ENCODE measurements at regions of chr15 and their contacts with region 1.

Region 1: DNA sequence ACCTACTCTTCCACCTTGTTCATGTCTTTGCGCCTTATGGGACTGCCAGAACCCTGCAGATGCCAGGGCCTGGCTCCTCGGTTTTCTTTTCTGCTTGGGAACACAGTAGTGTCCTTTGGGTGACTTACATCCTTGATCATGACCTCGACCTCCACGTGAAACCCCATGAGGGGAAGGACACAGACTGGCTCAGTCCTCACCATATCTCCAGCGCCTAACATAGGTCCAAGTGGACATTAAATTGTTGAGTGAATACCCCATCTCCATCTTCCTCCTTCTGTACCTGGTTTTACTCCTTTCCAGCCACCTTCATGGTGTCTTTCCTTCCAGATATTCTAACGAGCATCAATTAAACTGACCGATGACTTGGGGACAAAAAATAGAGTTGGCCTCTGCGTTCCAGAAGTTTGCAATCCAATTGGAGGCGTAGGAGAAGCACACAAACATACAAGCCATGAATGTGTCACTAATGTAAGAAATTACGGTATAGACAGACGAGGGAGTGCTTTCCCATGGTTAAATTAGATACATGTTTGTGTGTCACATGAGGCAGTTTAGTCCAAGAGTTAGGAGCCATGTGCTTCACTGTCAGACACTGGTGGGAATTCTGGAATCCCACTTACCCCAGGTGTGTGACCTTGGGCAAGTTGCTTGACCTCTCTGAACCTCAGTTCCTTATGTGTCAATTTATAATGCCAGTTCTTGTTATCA is 907 bp upstream of the HERC1 start:
- DNase-seq: no peak
- H3K4me3 ChIP-seq: peak overlapping the region; percentile 64 to 85
- H3K27ac ChIP-seq: peak overlapping the region; percentile 96
- H3K4me1 ChIP-seq: peaks cover 35% of the 10 kb centered on the region
- H3K27me3 ChIP-seq: no peaks in the 10 kb centered on the region
- CTCF ChIP-seq: no peak
- POLR2A ChIP-seq: no peak

Region 2: DNA sequence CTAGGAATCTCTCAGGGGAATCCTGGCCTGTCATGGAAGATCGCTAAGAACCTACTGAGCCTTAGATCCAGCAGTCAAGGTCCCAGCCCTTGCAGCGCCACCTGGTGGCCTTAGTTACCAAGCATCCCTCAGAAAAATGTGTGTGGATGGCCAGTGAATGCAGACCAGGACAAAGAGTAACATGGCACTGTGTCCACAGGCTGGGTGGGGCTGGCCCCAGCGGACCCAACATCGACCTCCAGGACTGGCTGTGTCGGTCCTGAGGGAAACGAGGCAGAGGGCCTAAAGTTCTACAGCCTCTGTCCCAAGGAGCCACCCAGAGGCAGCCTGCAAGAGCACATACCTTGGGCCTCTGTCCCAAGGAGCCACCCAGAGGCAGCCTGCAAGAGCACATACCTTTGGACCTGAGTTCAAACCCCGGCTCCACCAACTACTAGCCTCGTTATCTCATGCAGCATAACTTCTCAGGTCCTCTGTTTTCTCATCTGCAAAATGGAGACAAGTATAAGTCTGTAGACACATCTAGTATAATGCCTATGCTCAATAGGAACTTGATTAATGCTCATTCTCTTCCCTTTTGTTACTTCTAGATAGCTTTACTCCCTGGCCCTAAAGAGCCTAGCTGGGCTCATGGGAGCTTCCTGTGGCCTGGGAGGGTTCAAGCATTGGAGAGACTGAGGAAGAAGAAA is 56.6 kb after region 1 on chr15:
- intact Hi-C with region 1: loop called (anchors 5 kb)
- DNase-seq: no peak
- H3K4me3 ChIP-seq: no peak overlapping the region
- H3K27ac ChIP-seq: no peak overlapping the region
- H3K4me1 ChIP-seq: peaks cover 25% of the 10 kb centered on the region
- H3K27me3 ChIP-seq: no peaks in the 10 kb centered on the region
- CTCF ChIP-seq: peak; percentile 59 to 75 (median 72)
- POLR2A ChIP-seq: no peak

Region 3: DNA sequence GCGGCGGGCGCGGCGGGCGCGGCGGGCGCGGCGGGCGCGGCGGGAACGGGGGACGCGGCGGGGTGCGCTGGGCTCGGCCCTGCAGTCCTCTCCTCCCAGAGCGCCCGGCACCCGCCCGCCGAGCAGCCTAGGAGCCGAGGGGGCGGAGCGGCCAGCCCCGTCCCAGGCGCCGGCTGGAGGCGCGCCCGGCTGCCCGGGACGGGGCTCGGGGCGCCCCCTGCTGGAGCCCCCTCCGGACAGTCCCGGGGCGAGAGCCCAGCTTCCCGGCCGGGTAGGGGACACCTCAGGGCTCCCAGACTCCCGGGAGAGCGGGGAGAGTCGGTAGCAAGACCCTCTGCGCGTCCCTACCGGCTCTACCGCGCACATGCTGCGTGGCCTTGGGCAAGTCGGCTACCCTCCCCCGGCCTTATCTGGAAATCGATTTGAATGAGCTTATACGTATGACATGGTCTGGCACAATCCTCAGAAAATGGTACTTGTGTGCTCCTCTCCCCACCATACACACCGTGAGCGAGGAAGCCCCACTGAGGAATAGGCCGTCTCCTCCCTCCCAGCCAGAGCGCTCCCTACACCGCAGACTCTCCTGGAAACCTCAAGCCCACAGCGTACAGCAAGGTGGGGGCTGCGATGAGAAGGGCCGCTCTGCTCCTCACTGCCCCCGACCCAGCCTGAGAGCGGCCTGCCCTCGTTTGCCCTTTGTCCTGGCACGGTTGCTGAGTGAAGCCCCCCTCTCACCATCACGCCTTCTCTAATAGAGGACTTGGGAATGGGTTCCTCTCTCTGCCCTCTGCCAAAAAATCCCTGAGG is 211.9 kb after region 1 on chr15 and contains the start of gene DAPK2:
- intact Hi-C with region 1: no loop called
- DNase-seq: no peak
- H3K4me3 ChIP-seq: peak within 1 kb of the TSS; percentile 65 to 70
- H3K27ac ChIP-seq: peak within 1 kb of the TSS; percentile 75
- H3K4me1 ChIP-seq: peaks cover 41% of the 10 kb centered on the region
- H3K27me3 ChIP-seq: no peaks in the 10 kb centered on the region
- CTCF ChIP-seq: peak; percentile 72 to 94 (median 80)
- POLR2A ChIP-seq: no peak
- total RNA-seq, gene DAPK2: 50.3 TPM